Common myeloid progenitor, CD34-positive (primary cell): ENCODE measurements at regions of chr6 and their contacts with region 1.

Region 1: GRCh38 chr6:158072083-158072721 is 90.5 kb downstream of the SYNJ2 start:
- DNase-seq: peak; percentile 58 to 64 (median 63)
- H3K4me3 ChIP-seq: no peak overlapping the region
- H3K27ac ChIP-seq: no peak overlapping the region
- H3K4me1 ChIP-seq: peaks cover 4 to 38% (median 32%) of the 10 kb centered on the region in 4 experiments
- H3K27me3 ChIP-seq: no peaks in the 10 kb centered on the region

Region 2: GRCh38 chr6:157756708-157757429 is 315.3 kb before region 1 on chr6:
- CTCF ChIA-PET with region 1: interaction called, 28 read pairs
- POLR2A ChIA-PET with region 1: no interaction called
- DNase-seq: peak; percentile 78 to 87 (median 81)
- H3K4me3 ChIP-seq: no peak overlapping the region
- H3K27ac ChIP-seq: no peak overlapping the region
- H3K4me1 ChIP-seq: peaks cover 2 to 11% (median 10%) of the 10 kb centered on the region in 4 experiments
- H3K27me3 ChIP-seq: peaks cover 0 to 2% (median 0%) of the 10 kb centered on the region in 5 experiments

Region 3: DNA sequence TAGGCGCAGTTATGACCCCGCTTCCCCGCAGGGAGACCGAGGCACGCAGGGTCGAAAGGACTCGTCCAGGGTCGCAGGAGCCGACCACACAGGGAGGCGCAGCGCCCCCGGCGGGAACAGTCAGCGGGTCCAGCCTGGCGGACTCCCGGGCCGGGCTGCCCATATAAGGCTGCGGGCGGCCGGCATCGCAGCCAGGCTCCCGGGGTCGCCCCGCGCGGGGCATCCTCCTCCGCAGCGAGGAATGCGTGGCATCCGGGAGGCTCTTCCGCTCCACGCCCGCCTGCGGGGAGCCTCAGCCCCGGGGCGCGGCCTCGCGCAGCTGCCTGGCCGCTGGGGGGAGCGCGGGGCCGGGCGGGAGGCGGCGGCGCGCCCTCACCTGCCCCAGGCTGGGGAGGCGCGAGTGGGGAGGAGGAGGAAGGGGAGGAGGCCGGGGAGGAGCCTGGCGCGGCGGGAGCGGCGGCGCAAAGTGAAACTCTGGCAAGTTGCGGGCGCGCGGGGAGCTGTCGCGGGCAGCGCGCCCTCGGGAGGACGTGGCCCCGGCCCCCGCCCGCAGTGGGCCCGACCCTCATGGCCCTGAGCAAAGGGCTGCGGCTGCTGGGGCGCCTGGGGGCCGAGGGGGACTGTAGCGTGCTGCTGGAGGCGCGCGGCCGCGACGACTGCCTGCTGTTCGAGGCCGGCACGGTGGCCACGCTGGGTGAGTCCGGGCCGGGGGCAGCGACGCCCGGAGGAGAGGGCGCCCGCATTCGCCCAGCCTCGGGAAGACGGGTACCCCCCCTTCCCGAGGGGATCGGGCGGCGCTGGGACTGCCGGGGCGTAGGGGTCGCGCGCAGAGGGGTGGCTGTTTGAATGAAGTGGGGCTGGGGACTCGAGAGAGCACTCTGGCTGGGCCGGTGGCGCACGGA is 90.6 kb before region 1 on chr6 and contains the start of gene SYNJ2:
- CTCF ChIA-PET with region 1: interaction called, 22 read pairs
- POLR2A ChIA-PET with region 1: interaction called, 3 read pairs
- DNase-seq: peak; percentile 73 to 90 (median 83)
- H3K4me3 ChIP-seq: peak within 1 kb of the TSS; percentile 60 to 86 (median 75)
- H3K27ac ChIP-seq: peak within 1 kb of the TSS in 1 of 2 experiments; percentile 52
- H3K4me1 ChIP-seq: peaks cover 12 to 76% (median 68%) of the 10 kb centered on the region in 4 experiments
- H3K27me3 ChIP-seq: peaks cover 0 to 3% (median 0%) of the 10 kb centered on the region in 5 experiments

Region 4: DNA sequence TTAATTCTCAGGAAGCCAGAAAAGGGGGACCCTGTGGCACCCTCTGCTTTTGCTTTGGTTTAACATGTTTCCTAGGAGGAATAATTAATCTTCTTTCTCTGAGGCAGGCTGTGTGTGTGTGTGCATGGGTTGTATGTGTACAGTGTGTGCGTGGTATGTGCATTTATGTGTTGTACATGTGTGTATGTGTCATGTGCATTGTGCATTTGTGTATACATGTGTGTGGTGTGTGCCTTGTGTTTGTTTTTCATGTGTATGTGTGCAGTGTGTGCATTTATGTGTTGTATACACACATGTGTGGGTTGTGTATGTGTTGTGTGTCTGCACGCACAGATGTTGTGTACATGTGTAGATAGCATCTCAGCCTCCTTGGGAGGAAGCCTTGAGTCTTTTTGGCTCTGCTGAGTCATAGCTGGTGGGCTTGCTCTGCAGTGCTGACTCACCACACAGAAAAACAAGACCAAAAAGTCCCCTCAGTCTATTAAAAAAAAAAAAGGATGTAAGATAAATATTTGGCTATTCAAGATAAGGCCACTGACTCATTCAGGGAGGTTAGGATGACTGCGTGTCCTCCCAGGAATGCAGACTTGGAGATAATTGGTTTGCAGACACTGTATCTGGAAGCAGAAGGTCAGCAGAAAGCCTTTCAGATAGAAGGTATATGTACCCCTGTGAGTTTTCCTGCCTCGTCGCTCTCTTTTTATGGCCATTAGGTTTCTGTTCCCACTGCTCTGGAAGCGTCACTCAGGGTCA is 32.0 kb before region 1 on chr6:
- CTCF ChIA-PET with region 1: interaction called, 77 read pairs
- POLR2A ChIA-PET with region 1: interaction called, 3 read pairs
- DNase-seq: peak; percentile 96 to 100 (median 99)
- H3K4me3 ChIP-seq: peak overlapping the region in 3 of 7 experiments; percentile 40 to 60 (median 44)
- H3K27ac ChIP-seq: peak overlapping the region; percentile 60 to 88
- H3K4me1 ChIP-seq: peaks cover 2 to 39% (median 34%) of the 10 kb centered on the region in 4 experiments
- H3K27me3 ChIP-seq: no peaks in the 10 kb centered on the region

Region 5: GRCh38 chr6:158060455-158061360 is 11.5 kb before region 1 on chr6:
- CTCF ChIA-PET with region 1: interaction called, 42 read pairs
- POLR2A ChIA-PET with region 1: interaction called, 4 read pairs
- DNase-seq: peak; percentile 60 to 84 (median 77)
- H3K4me3 ChIP-seq: no peak overlapping the region
- H3K27ac ChIP-seq: peak overlapping the region in 1 of 2 experiments; percentile 39
- H3K4me1 ChIP-seq: peaks cover 0 to 14% (median 12%) of the 10 kb centered on the region in 4 experiments
- H3K27me3 ChIP-seq: no peaks in the 10 kb centered on the region

Region 6: DNA sequence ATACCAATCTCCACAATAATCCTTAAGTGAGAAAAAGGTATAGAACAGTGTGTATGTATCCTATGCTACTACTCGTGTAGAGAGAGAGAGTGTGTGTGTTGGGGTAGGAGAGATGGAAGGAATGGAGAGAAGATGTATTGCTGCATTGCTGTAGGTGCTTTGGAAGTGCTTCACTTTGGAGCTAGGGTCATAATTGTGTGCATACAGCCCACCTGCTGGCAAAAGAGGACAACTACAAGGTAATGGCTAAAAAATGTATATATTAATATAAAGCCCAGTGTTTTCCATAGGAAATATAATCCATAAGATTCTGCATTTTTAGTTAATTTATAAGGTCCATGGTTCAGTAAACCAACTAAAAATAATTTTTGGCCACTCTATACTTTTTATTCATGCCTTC is 59.7 kb after region 1 on chr6:
- CTCF ChIA-PET with region 1: interaction called, 22 read pairs
- POLR2A ChIA-PET with region 1: no interaction called
- DNase-seq: peak; percentile 23 to 53 (median 53)
- H3K4me3 ChIP-seq: no peak overlapping the region
- H3K27ac ChIP-seq: no peak overlapping the region
- H3K4me1 ChIP-seq: peaks cover 0 to 4% (median 0%) of the 10 kb centered on the region in 4 experiments
- H3K27me3 ChIP-seq: no peaks in the 10 kb centered on the region